Natural killer cell (primary cell): ENCODE measurements at regions of chr12 and their contacts with region 1.

Region 1: GRCh38 chr12:46124848-46125619 is 134.7 kb upstream of the SCAF11 start:
- DNase-seq: peak; percentile 18 to 85
- ATAC-seq: peak; percentile 88 to 98 (median 97)
- H3K4me3 ChIP-seq: no peak overlapping the region
- H3K4me3 Mint-ChIP-seq: peak overlapping the region; percentile 80
- H3K27ac ChIP-seq: no peak overlapping the region
- H3K27ac Mint-ChIP-seq: peak overlapping the region; percentile 84 to 85
- H3K4me1 ChIP-seq: peaks cover 5% of the 10 kb centered on the region
- H3K4me1 Mint-ChIP-seq: peaks cover 7% of the 10 kb centered on the region in 2 donors
- H3K27me3 ChIP-seq: no peaks in the 10 kb centered on the region
- H3K27me3 Mint-ChIP-seq: peaks cover 15 to 34% of the 10 kb centered on the region in 2 donors
- CTCF ChIP-seq: peak; percentile 62

Region 2: DNA sequence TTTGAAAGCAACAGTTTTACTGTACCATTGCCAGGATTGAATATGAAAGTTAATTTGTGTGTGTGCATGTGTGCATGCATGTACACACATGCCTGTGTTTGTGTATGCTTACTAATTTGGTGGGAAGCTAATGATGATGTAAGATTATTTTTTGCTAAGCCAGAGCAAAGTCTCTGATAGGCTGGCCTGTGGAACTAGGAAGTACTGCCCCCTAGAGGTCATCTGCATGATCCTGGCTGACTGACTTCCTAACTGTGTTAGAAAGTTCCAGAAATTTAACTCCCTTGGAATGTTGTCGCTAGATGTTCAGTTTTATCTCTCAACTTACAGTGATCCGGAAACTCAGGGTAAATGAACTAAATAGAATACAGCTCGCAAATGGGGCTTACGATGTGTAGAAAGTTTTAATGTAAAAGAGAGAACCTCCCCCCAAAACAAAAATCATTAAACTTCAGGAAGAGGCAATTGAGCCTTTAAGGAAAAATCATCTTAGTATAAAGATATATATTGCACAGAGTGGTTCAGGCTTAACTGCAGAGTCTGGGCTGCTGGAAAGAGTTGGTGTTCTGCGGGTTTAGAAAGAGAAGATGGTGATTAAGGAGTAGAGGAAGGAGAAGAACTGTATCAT is 178.1 kb after region 1 on chr12:
- intact Hi-C with region 1: loop called (anchors 1 kb)
- DNase-seq: peak in 1 of 2 donors; percentile 88
- ATAC-seq: peak; percentile 84 to 92 (median 91)
- H3K4me3 ChIP-seq: no peak overlapping the region
- H3K4me3 Mint-ChIP-seq: no peak overlapping the region
- H3K27ac ChIP-seq: no peak overlapping the region
- H3K27ac Mint-ChIP-seq: no peak overlapping the region
- H3K4me1 ChIP-seq: no peaks in the 10 kb centered on the region
- H3K4me1 Mint-ChIP-seq: peaks cover 0 to 5% of the 10 kb centered on the region in 2 donors
- H3K27me3 ChIP-seq: no peaks in the 10 kb centered on the region
- H3K27me3 Mint-ChIP-seq: peaks cover 16 to 19% of the 10 kb centered on the region in 2 donors
- CTCF ChIP-seq: peak; percentile 90

Region 3: GRCh38 chr12:46933947-46934346 is 808.9 kb after region 1 on chr12:
- intact Hi-C with region 1: loop called (anchors 2 kb)
- DNase-seq: peak in 1 of 2 donors; percentile 47
- ATAC-seq: peak in 1 of 3 donors; percentile 45
- H3K4me3 ChIP-seq: no peak overlapping the region
- H3K4me3 Mint-ChIP-seq: no peak overlapping the region
- H3K27ac ChIP-seq: no peak overlapping the region
- H3K27ac Mint-ChIP-seq: no peak overlapping the region
- H3K4me1 ChIP-seq: no peaks in the 10 kb centered on the region
- H3K4me1 Mint-ChIP-seq: no peaks in the 10 kb centered on the region
- H3K27me3 ChIP-seq: peaks cover 5% of the 10 kb centered on the region
- H3K27me3 Mint-ChIP-seq: peaks cover 21 to 46% of the 10 kb centered on the region in 2 donors
- CTCF ChIP-seq: peak; percentile 32

Region 4: DNA sequence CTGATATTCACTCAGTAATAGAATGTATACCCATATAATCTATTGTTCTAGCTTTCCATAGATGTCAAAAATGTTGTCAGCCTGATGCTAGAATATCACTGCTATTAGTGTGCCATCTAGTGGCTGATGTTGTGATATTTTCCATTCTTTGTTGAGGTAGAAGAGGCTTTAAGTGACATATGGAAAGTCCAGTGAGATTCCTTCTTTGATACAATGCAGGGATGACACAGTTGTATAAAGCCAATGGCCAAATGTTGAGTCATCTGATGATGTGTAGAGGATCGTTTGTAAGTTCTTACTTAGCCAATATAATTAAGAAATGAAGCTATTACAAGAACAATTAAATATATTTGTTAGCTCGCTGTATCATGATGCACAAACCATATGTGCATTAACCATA is 896.3 kb after region 1 on chr12:
- intact Hi-C with region 1: loop called (anchors 2 kb)
- DNase-seq: peak in 1 of 2 donors; percentile 74
- ATAC-seq: peak; percentile 52 to 71 (median 67)
- H3K4me3 ChIP-seq: no peak overlapping the region
- H3K4me3 Mint-ChIP-seq: no peak overlapping the region
- H3K27ac ChIP-seq: no peak overlapping the region
- H3K27ac Mint-ChIP-seq: no peak overlapping the region
- H3K4me1 ChIP-seq: no peaks in the 10 kb centered on the region
- H3K4me1 Mint-ChIP-seq: no peaks in the 10 kb centered on the region
- H3K27me3 ChIP-seq: no peaks in the 10 kb centered on the region
- H3K27me3 Mint-ChIP-seq: peaks cover 34 to 50% of the 10 kb centered on the region in 2 donors
- CTCF ChIP-seq: peak; percentile 87